ENCODE measurements at regions of chr10 and their contacts with region 1.

Region 1: GRCh38 chr10:62244780-62245467 is 23.7 kb downstream of the RTKN2 start:
- DNase-seq: peak; percentile 81
- H3K4me3 ChIP-seq: peak overlapping the region; percentile 74
- H3K27ac ChIP-seq: no peak overlapping the region
- H3K4me1 ChIP-seq: peaks cover 35% of the 10 kb centered on the region
- H3K27me3 ChIP-seq: no peaks in the 10 kb centered on the region

Region 2: GRCh38 chr10:61750929-61751471 is 493.9 kb before region 1 on chr10:
- in situ Hi-C with region 1: loop called (anchors 25 kb)
- DNase-seq: peak; percentile 77
- H3K4me3 ChIP-seq: no peak overlapping the region
- H3K27ac ChIP-seq: no peak overlapping the region
- H3K4me1 ChIP-seq: peaks cover 33% of the 10 kb centered on the region
- H3K27me3 ChIP-seq: no peaks in the 10 kb centered on the region

Region 3: DNA sequence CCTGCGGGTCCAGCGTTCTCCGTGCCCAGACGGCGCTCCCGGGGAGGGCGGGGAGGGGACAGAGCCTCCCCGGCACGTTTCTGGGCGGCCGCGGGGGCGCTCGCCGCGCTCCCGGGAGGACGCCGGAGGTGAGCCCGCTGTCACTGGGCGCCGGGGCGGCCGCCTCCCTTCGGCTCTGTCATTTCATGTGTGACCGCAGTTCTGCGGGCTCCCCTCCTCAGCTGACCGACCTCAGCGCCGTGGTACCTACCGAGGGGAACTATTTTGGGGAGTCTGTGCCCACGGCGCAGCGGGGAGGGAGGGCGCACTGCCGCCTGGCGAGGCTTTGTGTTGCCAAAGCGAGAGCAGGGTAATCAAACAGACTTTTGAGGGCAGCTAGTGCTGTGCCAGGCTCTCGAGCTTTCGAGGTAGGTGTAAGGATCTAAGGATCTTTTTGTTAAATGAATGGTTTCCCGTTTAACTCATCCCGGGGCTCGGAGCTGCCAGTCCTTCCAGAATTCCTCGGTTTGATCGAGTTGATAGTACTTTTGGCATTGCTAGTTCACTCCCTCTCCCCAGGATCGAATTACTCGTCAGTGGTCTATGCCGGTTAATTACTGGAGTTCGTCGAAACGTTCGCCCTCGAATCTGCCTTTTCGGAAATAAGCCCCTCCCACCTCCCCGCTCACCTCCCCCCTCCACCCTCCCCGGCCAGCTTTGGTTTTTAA is 341.6 kb before region 1 on chr10:
- in situ Hi-C with region 1: loop called (anchors 25 kb)
- DNase-seq: peak; percentile 66
- H3K4me3 ChIP-seq: peak overlapping the region; percentile 98
- H3K27ac ChIP-seq: peak overlapping the region; percentile 38
- H3K4me1 ChIP-seq: peaks cover 23% of the 10 kb centered on the region
- H3K27me3 ChIP-seq: no peaks in the 10 kb centered on the region

Region 4: DNA sequence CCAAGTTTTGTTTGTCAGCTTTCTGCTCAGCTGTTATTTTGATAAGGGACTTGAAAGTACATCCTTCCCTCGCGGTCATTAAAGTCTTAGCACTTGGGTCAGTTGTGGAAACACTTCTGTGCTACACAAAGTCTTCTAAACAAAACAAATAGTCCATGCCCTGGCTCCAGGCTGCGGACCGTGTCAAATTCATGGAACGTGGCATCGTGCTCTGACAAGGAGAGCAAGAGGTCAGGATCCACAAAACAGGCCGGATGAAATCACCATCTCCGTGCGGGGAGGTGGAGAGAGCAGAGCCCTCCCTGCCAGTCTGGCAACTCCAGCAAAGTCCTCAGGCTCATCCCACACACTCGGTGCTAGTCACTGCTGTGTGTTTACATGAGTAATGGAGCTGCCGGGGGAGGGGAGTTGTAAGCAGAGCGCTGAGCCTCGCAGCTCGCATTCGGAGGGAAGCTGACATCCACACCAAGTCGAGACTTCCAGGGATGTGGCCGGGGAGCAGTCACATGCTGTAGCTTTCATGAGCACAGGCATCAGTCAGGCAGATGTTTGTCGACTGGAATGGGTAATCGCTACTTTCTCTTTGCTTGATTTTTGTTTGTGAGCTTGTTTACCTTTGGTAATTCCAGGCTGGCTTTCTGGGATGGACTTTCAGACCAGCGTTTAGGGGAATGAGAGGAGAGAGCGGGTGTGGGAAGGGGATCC is 195.9 kb before region 1 on chr10:
- in situ Hi-C with region 1: loop called (anchors 10 kb)
- DNase-seq: peak; percentile 100
- H3K4me3 ChIP-seq: peak overlapping the region; percentile 94
- H3K27ac ChIP-seq: peak overlapping the region; percentile 91
- H3K4me1 ChIP-seq: peaks cover 77% of the 10 kb centered on the region
- H3K27me3 ChIP-seq: no peaks in the 10 kb centered on the region